PC-9 (cell line): ENCODE measurements at regions of chr20 and their contacts with region 1.

Region 1: DNA sequence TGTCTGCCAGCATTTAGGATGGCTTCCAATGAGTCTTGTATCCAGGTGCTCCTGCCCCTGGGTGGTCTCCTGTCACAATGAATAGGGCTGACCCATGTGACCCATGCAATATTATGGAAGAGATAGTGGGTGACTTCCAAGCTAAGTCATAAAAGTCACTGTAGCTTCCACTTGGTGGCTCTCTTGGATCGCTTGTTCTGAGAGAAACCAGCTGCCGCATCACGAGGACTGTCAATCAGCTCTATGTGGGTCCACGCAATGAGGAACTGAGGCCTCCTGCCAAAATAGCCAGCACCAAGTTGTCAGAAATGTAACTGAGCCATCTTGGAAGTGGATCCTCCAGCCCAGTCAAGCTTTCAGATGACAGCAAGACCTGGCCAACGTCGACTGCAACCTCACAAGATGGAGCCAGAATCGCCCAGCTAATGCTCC is 14.9 kb upstream of the MATN4 start:
- DNase-seq: peak; percentile 48 to 55
- H3K4me3 ChIP-seq: no peak overlapping the region
- H3K27ac ChIP-seq: no peak overlapping the region
- H3K4me1 ChIP-seq: peaks cover 22% of the 10 kb centered on the region
- H3K27me3 ChIP-seq: no peaks in the 10 kb centered on the region
- CTCF ChIP-seq: peak; percentile 49; the same call in 1 of the 2 replicates

Region 2: DNA sequence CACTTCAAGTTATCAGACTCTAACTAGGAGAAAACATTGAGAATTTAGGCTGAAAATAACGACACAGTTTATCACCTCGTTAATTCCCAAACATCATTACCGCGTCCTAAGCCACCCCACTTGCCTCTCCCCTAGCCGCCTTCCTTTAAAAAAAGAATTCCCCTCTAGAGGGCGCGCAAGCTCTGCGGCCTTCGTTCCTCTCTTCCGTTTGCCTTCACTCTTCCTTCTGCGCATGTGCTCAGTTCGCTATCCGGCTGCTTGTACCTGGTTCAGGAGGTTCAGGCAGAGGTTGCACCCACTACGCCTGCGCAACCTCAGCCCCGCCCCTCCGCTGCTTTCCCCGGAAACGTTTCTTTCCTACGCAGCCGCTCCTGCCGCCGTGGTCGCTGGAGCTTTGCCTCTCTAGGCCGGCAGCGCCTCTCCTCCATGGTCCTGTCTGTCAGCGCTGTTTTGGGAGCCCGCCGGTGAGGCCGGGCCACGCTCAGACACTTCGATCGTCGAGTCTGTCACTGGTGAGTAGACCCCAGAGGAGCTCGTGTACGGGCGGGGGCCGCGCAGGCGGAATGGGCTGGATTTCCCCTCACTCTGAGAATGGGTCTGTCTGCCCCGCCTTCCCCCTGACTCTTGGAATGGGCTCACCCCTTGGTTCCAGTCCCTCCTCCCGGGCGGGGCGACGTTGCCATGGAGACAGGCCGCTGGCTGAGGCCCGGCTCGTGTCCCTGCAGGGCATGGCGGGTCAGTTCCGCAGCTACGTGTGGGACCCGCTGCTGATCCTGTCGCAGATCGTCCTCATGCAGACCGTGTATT is 40.0 kb after region 1 on chr20 and contains the start of gene SYS1:
- CTCF ChIA-PET with region 1: interaction called, 18 read pairs
- POLR2A ChIA-PET with region 1: interaction called, 6 read pairs
- intact Hi-C with region 1: loop called (anchors 1 kb)
- DNase-seq: peak; percentile 97 to 99
- H3K4me3 ChIP-seq: peak within 1 kb of the TSS; percentile 83
- H3K27ac ChIP-seq: peak within 1 kb of the TSS; percentile 76
- H3K4me1 ChIP-seq: peaks cover 29% of the 10 kb centered on the region
- H3K27me3 ChIP-seq: no peaks in the 10 kb centered on the region
- CTCF ChIP-seq: peak; percentile 92
- total RNA-seq, gene SYS1: 35.1 and 38.8 TPM in 2 replicates

Region 3: GRCh38 chr20:45415774-45416637 is 93.0 kb after region 1 on chr20 and contains the start of gene PIGT:
- CTCF ChIA-PET with region 1: interaction called, 4 read pairs
- POLR2A ChIA-PET with region 1: no interaction called
- intact Hi-C with region 1: loop called (anchors 5 kb)
- DNase-seq: peak; percentile 81 to 85
- H3K4me3 ChIP-seq: peak within 1 kb of the TSS; percentile 76
- H3K27ac ChIP-seq: peak within 1 kb of the TSS; percentile 35
- H3K4me1 ChIP-seq: peaks cover 48% of the 10 kb centered on the region
- H3K27me3 ChIP-seq: no peaks in the 10 kb centered on the region
- CTCF ChIP-seq: no peak
- total RNA-seq, gene PIGT: 101 and 121 TPM in 2 replicates

Region 4: DNA sequence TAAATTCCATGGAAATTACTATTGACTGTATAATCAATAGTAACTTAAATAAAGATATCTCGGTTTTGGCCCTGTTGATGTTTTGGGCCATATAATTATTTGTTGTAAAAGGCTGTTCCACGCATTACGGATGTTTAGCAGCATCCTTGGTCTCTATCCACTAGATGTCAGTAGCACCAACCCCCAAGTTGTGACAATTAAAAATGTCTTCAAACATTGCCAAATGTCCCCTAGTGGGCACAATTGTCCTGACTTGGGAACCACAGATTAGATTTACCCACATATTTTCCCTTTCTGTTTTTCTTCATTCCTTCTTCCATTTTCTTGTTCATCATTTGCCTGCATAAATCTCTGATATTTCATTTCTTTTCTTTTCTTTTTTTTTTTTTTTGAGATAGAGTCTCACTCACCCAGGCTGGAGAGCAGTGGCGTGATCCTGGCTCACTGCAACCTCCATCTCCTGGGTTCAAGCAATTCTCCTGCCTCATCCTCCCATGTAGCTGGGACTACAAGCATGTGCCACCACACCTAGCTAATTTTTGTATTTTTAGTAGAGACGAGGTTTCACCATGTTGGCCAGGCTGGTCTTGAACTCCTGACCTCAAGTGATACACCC is 269.7 kb after region 1 on chr20:
- CTCF ChIA-PET with region 1: no interaction called
- POLR2A ChIA-PET with region 1: no interaction called
- intact Hi-C with region 1: loop called (anchors 5 kb)
- DNase-seq: peak; percentile 28 to 70
- H3K4me3 ChIP-seq: no peak overlapping the region
- H3K27ac ChIP-seq: no peak overlapping the region
- H3K4me1 ChIP-seq: no peaks in the 10 kb centered on the region
- H3K27me3 ChIP-seq: peaks cover 7% of the 10 kb centered on the region; the same call in 1 of the 2 replicates
- CTCF ChIP-seq: peak; percentile 86